MCF 10A (cell line): ENCODE measurements at regions of chr2 and their contacts with region 1.

Region 1: GRCh38 chr2:41782306-41783158 is 265.3 kb upstream of the PKDCC start:
- DNase-seq: peak; percentile 56
- H3K4me3 Mint-ChIP-seq: no peak overlapping the region
- H3K27ac Mint-ChIP-seq: no peak overlapping the region
- H3K4me1 Mint-ChIP-seq: no peaks in the 10 kb centered on the region
- H3K27me3 Mint-ChIP-seq: peaks cover 3% of the 10 kb centered on the region
- CTCF ChIP-seq: peak; percentile 75

Region 2: GRCh38 chr2:40488101-40488601 is 1294.4 kb before region 1 on chr2:
- CTCF ChIA-PET with region 1: no interaction called
- POLR2A ChIA-PET with region 1: no interaction called
- intact Hi-C with region 1: loop called (anchors 2 kb)
- DNase-seq: peak; percentile 51
- H3K4me3 Mint-ChIP-seq: no peak overlapping the region
- H3K27ac Mint-ChIP-seq: no peak overlapping the region
- H3K4me1 Mint-ChIP-seq: peaks cover 19% of the 10 kb centered on the region
- H3K27me3 Mint-ChIP-seq: no peaks in the 10 kb centered on the region
- CTCF ChIP-seq: peak; percentile 40

Region 3: GRCh38 chr2:40760071-40760666 is 1022.4 kb before region 1 on chr2:
- CTCF ChIA-PET with region 1: interaction called, 3 read pairs
- POLR2A ChIA-PET with region 1: no interaction called
- intact Hi-C with region 1: loop called (anchors 2 kb)
- DNase-seq: peak; percentile 64
- H3K4me3 Mint-ChIP-seq: no peak overlapping the region
- H3K27ac Mint-ChIP-seq: no peak overlapping the region
- H3K4me1 Mint-ChIP-seq: no peaks in the 10 kb centered on the region
- H3K27me3 Mint-ChIP-seq: no peaks in the 10 kb centered on the region
- CTCF ChIP-seq: peak; percentile 87

Region 4: GRCh38 chr2:40844353-40845277 is 937.9 kb before region 1 on chr2:
- CTCF ChIA-PET with region 1: no interaction called
- POLR2A ChIA-PET with region 1: no interaction called
- intact Hi-C with region 1: loop called (anchors 5 kb)
- DNase-seq: peak; percentile 60
- H3K4me3 Mint-ChIP-seq: no peak overlapping the region
- H3K27ac Mint-ChIP-seq: no peak overlapping the region
- H3K4me1 Mint-ChIP-seq: no peaks in the 10 kb centered on the region
- H3K27me3 Mint-ChIP-seq: no peaks in the 10 kb centered on the region
- CTCF ChIP-seq: peak; percentile 22

Region 5: DNA sequence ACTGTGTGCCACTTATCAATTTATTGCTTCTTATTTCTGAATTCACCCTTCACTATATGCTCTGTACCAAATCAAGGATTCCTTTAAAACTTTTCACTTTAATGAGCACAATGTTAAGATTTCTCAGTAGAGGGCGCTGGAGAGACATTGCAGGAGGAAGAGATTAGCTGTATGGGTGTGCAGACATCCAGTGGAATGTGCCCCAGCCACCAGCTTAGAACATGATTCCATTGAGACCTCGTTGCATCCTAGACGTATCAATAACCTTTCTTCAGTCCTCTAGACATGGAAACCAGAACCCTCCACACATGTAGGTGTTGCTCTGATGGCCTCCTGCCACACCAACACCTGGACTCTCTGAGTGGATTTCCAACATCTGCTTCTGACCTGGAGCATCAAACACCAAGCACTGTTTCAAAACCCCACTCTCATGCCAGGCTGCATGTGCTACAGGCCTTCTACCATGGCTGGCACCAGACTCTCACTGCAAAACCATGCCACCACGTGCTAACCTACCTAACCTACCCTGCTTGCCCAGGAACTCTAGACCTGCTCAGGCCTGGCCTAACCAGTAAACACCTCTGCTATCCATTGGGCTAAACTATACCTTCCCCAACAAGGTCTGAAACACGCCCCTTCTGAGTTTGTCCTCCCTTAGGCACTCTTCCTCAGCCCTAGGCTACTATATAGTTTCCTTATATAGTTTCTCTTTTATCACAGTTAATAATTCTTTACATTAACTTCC is 367.9 kb before region 1 on chr2:
- CTCF ChIA-PET with region 1: interaction called, 14 read pairs
- POLR2A ChIA-PET with region 1: interaction called, 3 read pairs
- intact Hi-C with region 1: loop called (anchors 1 kb)
- DNase-seq: peak; percentile 67
- H3K4me3 Mint-ChIP-seq: no peak overlapping the region
- H3K27ac Mint-ChIP-seq: no peak overlapping the region
- H3K4me1 Mint-ChIP-seq: no peaks in the 10 kb centered on the region
- H3K27me3 Mint-ChIP-seq: no peaks in the 10 kb centered on the region
- CTCF ChIP-seq: peak; percentile 64

Region 6: GRCh38 chr2:41698678-41699422 is 83.7 kb before region 1 on chr2:
- CTCF ChIA-PET with region 1: interaction called, 7 read pairs
- POLR2A ChIA-PET with region 1: no interaction called
- intact Hi-C with region 1: loop called (anchors 5 kb)
- DNase-seq: no peak
- H3K4me3 Mint-ChIP-seq: no peak overlapping the region
- H3K27ac Mint-ChIP-seq: no peak overlapping the region
- H3K4me1 Mint-ChIP-seq: no peaks in the 10 kb centered on the region
- H3K27me3 Mint-ChIP-seq: no peaks in the 10 kb centered on the region
- CTCF ChIP-seq: peak; percentile 69

Region 7: DNA sequence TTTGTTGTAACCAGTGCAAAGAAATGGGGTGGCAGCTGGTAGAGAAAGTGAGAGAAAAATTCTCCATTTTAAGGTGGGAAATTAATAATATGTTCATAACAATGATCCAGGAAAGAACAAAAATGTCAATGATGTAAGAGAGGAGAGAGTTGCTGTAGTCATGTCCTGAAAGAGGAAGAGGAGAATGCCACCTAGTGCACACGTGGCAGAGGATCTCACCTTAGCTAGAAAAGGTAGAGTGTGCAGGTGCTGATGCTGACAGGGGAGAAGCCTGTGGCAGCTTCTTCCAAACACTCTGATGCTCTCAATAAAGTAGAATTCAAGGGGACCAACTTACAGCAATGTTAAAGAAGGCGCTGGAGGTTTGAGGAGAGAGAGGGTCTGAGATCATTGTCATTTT is 17.6 kb before region 1 on chr2:
- CTCF ChIA-PET with region 1: interaction called, 17 read pairs
- POLR2A ChIA-PET with region 1: no interaction called
- intact Hi-C with region 1: no loop called
- DNase-seq: peak; percentile 14
- H3K4me3 Mint-ChIP-seq: no peak overlapping the region
- H3K27ac Mint-ChIP-seq: no peak overlapping the region
- H3K4me1 Mint-ChIP-seq: no peaks in the 10 kb centered on the region
- H3K27me3 Mint-ChIP-seq: peaks cover 2% of the 10 kb centered on the region
- CTCF ChIP-seq: peak; percentile 13